ENCODE measurements at regions of chr2 and their contacts with region 1.

Region 1: DNA sequence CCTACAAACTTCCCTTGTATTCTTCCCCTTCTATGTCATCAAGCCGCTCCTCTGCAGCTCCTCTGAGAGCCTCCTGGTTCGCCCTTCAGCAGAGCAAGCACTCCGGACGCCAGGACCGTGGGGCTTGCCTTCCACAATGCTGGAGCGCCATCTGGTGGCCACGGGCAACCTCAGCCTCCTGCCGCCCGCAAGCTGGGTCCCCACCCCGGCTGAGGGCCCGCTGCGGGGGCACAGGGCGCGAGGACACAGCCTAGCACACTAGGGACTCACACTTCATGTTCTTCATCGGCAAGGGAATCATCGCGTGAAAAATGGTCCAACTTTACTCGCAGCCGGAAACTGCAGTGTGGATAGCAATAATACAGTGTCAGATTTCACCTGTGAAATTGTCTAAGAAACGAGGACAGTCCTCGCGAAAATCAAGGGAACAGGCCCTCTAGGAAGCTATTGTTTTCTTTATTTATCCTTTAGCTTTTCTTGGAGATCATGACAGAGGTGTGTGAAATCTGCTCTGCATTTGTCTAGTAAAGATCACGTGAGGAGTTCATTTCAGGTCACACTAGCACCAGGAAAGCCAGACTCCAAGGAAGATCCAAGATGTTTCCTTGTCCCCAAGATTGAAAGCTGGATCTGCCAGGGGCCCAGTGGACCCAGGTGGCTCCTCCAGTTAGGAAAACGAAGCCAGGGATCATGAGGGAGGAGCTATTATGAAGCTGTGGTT is 5.8 kb downstream of the PRLH start:
- DNase-seq: peak; percentile 83 to 98
- H3K4me3 ChIP-seq: no peak overlapping the region
- H3K27ac ChIP-seq: no peak overlapping the region
- H3K4me1 ChIP-seq: peaks cover 0 to 8% (median 4%) of the 10 kb centered on the region in 4 experiments; a peak in 3 of 7 replicates
- H3K27me3 ChIP-seq: no peaks in the 10 kb centered on the region
- CTCF ChIP-seq: peak; percentile 98 to 99 (median 98)
- EP300 ChIP-seq: 0 out of 3 replicates have a peak, but pooled peaks of 1 of the 2 experiments have one; percentile 14
- POLR2A ChIP-seq: no peak
- RAD21 ChIP-seq: peak; percentile 99 to 100

Region 2: DNA sequence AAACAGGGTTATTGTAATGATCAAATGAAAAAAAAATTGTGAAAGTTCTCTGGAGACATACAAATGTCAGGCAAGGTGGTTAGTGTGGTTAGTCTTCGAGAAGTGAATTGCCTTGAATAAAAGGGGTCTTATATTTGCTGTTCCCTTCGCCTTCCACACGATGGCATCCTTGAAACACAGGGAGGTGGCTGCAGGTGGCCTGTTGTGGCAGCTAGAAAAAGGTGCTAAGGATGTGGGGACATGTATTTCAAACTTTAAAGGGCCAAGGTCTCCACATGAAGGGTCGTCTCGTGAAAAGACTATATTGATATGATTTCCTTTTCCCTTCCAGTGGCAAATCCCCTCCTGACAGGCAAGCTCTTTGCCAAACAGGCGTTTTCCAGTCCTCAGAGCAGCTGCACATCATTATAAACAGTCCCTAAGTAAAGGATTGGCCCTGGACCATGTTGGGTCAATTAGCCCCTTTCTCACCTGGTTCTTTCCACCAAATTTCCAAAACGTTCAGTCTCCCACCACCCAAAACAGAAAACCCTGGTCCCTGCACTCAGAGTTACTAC is 418.0 kb before region 1 on chr2:
- CTCF ChIA-PET with region 1: interaction called, 16 read pairs
- POLR2A ChIA-PET with region 1: no interaction called
- DNase-seq: peak in 1 of 2 experiments; percentile 67
- H3K4me3 ChIP-seq: no peak overlapping the region
- H3K27ac ChIP-seq: no peak overlapping the region
- H3K4me1 ChIP-seq: no peaks in the 10 kb centered on the region; a peak in 2 of 7 replicates
- H3K27me3 ChIP-seq: no peaks in the 10 kb centered on the region
- CTCF ChIP-seq: peak; percentile 69 to 91 (median 78)
- EP300 ChIP-seq: no peak
- POLR2A ChIP-seq: no peak
- RAD21 ChIP-seq: peak; percentile 99

Region 3: DNA sequence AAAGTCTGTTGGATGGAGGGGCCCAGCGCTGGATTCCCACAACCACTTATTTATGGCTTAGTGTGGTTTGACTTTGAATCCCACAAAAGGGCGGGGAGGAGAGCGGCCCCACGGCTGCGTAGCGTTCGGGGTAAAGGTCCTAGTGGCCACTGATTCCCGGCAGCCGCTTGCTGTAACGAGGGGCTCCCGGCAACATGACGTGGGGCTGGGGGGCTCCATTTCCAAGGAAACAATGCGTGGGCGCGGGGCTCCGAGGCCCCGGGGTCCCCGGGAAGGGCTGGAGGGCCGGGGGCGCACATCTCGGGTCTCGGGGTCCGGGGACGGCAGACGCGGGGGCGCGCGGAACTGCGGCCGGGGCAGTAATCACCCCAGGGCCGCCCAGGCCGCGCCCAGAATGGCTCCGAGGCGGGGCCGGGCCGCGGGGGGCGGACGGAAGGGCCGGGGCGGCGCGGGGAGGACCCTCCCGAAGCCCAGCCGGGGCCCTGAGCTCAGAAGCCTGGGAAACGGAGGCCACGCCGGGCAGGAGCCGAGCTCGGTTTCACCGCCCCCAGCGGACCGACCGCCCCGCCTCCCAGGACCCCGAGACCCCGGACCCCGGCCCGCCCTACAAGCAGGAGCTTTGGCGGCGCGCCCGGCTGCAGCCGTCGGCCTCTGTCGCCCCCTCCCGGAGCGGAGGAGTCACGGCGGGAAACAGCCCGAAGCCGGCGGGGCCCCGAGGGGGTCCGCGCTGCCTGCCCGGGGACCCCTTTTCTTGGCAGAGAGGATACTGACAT is 97.1 kb before region 1 on chr2:
- CTCF ChIA-PET with region 1: interaction called, 54 read pairs
- POLR2A ChIA-PET with region 1: interaction called, 6 read pairs
- DNase-seq: peak in 1 of 2 experiments; percentile 97
- H3K4me3 ChIP-seq: peak overlapping the region; percentile 53 to 96 (median 64)
- H3K27ac ChIP-seq: peak overlapping the region; percentile 61; the same call in 1 of the 2 replicates
- H3K4me1 ChIP-seq: peaks cover 0 to 13% (median 7%) of the 10 kb centered on the region in 4 experiments; a peak in 4 of 7 replicates
- H3K27me3 ChIP-seq: peaks cover 0 to 7% (median 7%) of the 10 kb centered on the region in 4 experiments; a peak in 3 of 7 replicates
- CTCF ChIP-seq: peak; percentile 63 to 90 (median 77)
- EP300 ChIP-seq: no peak
- POLR2A ChIP-seq: peak in 1 of 2 experiments; percentile 59; a peak in 1 of 3 replicates
- RAD21 ChIP-seq: peak; percentile 46 to 70; a peak in 3 of 4 replicates

Region 4: DNA sequence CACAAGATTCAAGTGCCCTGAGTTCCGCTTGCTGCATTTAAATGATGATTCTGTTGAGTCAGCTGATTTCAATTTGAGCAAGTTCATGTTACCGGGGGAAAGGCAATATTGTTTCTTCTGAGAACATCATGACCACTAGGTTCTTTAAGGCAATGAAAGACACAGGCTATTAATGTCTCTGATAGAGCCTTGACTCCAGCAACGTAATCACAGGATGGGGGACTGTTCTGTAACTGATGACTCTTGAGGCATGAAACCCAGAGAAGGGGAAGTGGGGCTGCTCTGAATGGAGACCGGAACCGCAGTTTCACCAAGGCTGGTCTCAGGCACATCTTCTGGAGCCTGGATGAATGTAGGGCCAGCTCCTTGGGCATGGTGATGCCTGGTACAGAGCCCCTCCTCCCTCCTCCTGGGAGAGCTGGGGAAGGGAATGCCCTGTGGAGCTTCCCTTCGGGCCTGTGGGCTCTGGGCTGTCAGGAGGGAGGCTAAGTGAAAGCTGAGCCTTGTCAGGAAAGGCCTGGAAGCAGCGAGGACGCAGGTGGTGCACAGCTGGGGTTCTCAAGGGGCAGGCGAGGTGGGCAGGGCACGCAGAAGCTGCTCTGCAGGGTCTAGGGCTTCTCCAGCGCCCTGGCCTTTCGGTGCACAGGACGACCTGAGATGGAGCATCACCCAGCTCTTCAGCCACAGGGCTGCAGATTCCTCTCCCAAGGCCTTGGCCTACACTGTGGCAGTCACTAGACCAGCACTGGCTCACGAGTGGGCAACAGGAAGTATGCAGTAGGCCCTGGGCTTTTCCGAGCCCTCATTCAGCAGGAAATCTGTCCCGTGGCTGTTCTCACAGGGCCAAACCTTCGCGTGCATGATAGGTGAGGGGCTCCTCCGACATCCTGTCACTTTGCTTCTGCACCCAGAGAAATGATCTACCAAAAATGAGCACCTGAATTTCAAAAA is 42.5 kb before region 1 on chr2:
- CTCF ChIA-PET with region 1: interaction called, 24 read pairs
- POLR2A ChIA-PET with region 1: interaction called, 3 read pairs
- DNase-seq: no peak
- H3K4me3 ChIP-seq: no peak overlapping the region
- H3K27ac ChIP-seq: no peak overlapping the region
- H3K4me1 ChIP-seq: no peaks in the 10 kb centered on the region; a peak in 1 of 7 replicates
- H3K27me3 ChIP-seq: no peaks in the 10 kb centered on the region
- CTCF ChIP-seq: no peak
- EP300 ChIP-seq: no peak
- POLR2A ChIP-seq: no peak
- RAD21 ChIP-seq: no peak

Region 5: GRCh38 chr2:237558906-237559641 is 13.1 kb before region 1 on chr2:
- CTCF ChIA-PET with region 1: interaction called, 23 read pairs
- POLR2A ChIA-PET with region 1: interaction called, 3 read pairs
- DNase-seq: no peak
- H3K4me3 ChIP-seq: no peak overlapping the region
- H3K27ac ChIP-seq: no peak overlapping the region
- H3K4me1 ChIP-seq: no peaks in the 10 kb centered on the region
- H3K27me3 ChIP-seq: no peaks in the 10 kb centered on the region; a peak in 1 of 7 replicates
- CTCF ChIP-seq: no peak
- EP300 ChIP-seq: no peak
- POLR2A ChIP-seq: no peak
- RAD21 ChIP-seq: no peak

Region 6: GRCh38 chr2:237616734-237617586 is 44.8 kb after region 1 on chr2:
- CTCF ChIA-PET with region 1: interaction called, 12 read pairs
- POLR2A ChIA-PET with region 1: interaction called, 6 read pairs
- DNase-seq: no peak
- H3K4me3 ChIP-seq: no peak overlapping the region
- H3K27ac ChIP-seq: no peak overlapping the region
- H3K4me1 ChIP-seq: peaks cover 9 to 21% (median 17%) of the 10 kb centered on the region in 4 experiments
- H3K27me3 ChIP-seq: no peaks in the 10 kb centered on the region; a peak in 1 of 7 replicates
- CTCF ChIP-seq: no peak
- EP300 ChIP-seq: no peak
- POLR2A ChIP-seq: no peak
- RAD21 ChIP-seq: no peak

Region 7: DNA sequence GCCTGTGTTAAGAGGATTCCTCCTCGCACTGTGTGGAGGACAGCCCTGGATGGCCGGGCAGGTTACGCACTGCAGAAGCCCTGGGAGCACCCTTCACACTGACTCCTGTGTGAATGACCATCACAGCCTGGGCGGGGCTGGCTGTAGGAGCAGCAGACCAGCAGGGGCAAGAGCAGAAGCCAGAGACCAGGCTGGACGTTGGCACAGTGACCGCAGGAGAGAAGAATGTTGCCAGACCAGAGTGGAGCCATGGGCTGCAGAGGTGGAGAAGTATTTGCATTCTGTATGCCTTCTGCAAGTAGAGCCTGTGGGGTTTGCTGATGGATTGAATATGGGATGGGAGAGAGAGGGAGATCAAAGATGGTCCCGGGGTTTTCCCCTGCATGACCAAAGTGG is 78.3 kb after region 1 on chr2:
- CTCF ChIA-PET with region 1: no interaction called
- POLR2A ChIA-PET with region 1: no interaction called
- DNase-seq: peak in 1 of 2 experiments; percentile 38
- H3K4me3 ChIP-seq: no peak overlapping the region
- H3K27ac ChIP-seq: no peak overlapping the region
- H3K4me1 ChIP-seq: no peaks in the 10 kb centered on the region; a peak in 1 of 7 replicates
- H3K27me3 ChIP-seq: no peaks in the 10 kb centered on the region
- CTCF ChIP-seq: no peak
- EP300 ChIP-seq: no peak
- POLR2A ChIP-seq: no peak
- RAD21 ChIP-seq: no peak

Region 8: GRCh38 chr2:238042849-238043584 is 470.8 kb after region 1 on chr2:
- CTCF ChIA-PET with region 1: no interaction called
- POLR2A ChIA-PET with region 1: no interaction called
- DNase-seq: no peak
- H3K4me3 ChIP-seq: no peak overlapping the region
- H3K27ac ChIP-seq: no peak overlapping the region
- H3K4me1 ChIP-seq: no peaks in the 10 kb centered on the region
- H3K27me3 ChIP-seq: no peaks in the 10 kb centered on the region
- CTCF ChIP-seq: no peak
- EP300 ChIP-seq: no peak
- POLR2A ChIP-seq: no peak
- RAD21 ChIP-seq: no peak

Measured in H1 (cell line).